ENCODE measurements at regions of chr19 and their contacts with region 1.

Region 1: DNA sequence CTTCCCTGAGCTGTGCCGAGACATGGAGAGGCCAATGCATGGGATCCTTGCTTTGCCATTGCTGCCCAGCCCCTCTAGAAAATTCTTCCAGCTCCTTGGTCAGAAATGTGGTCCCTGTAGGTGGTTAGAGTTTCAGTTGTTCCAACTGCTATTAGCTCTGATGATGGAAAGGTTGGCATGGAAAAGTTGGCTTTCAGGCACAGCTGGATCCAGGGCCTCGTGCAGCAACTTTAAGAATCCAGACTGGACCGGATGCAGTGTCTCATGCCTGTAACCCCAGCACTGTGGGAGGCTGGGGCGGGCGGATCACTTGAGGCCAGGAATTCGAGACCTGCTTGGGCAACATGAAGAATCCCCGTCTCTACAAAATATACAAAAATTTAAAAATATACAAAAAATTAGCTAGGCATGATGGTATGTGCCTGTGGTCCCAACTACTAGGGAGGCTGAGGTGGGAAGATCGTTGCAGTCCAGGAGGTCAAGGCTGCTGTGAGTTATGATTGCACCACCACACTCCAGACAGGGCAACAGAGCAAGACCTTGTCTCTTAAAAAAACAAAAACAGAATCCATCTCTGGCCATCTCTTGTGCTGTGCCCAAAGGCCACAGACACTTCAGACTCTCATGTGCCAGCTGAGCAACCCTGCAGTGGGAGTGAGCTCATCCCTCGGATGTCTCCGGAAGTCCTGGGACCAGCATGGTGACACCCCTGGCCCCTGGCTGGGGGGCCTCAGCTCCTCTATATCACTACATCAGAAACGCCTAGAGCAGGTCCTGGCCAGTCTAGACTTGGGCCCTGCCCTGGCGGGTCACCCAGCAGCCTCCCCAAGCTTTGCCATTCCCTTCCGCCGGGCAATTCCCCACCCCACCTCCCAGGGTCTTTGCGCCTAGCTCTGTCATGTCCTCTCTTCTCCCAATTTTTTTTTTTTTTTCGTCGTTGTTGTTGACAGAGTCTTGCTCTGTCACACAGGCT is 16.8 kb downstream of the MEX3D start:
- DNase-seq: no peak
- H3K4me3 ChIP-seq: no peak overlapping the region
- H3K27me3 ChIP-seq: no peaks in the 10 kb centered on the region
- CTCF ChIP-seq: no peak

Region 2: DNA sequence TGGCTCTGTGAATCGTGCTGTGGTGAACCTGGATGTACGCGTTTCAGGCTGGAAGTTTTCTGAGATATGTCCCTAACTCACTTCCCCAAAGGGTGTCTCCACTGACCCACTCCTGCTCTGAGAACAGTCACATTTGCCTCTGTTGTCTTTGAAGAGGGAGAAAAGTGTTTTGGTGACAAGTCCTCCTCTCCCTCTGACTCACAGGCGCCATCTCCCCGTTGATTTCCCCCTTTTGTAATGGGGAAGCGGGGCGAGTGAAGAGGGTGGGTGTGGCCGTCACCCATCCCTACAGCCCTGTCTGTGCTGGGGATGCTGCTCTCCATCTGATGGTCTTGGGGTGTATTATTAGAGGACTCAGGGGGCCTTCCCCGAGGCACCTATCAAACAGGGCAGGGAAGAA is 91.9 kb before region 1 on chr19:
- CTCF ChIA-PET with region 1: no interaction called
- POLR2A ChIA-PET with region 1: no interaction called
- DNase-seq: no peak
- H3K4me3 ChIP-seq: no peak overlapping the region
- H3K27me3 ChIP-seq: peaks cover 12% of the 10 kb centered on the region
- CTCF ChIP-seq: no peak

Region 3: GRCh38 chr19:1478934-1479707 is 72.2 kb before region 1 on chr19 and contains the start of gene C19orf25:
- CTCF ChIA-PET with region 1: no interaction called
- POLR2A ChIA-PET with region 1: no interaction called
- DNase-seq: peak; percentile 64
- H3K4me3 ChIP-seq: peak within 1 kb of the TSS; percentile 99
- H3K27me3 ChIP-seq: no peaks in the 10 kb centered on the region
- CTCF ChIP-seq: no peak
- polyA plus RNA-seq, gene C19orf25: 23.9 and 32.6 TPM in 2 replicates

Region 4: GRCh38 chr19:1533510-1534150 is 17.7 kb before region 1 on chr19:
- CTCF ChIA-PET with region 1: interaction called, 18 read pairs
- POLR2A ChIA-PET with region 1: no interaction called
- DNase-seq: no peak
- H3K4me3 ChIP-seq: no peak overlapping the region
- H3K27me3 ChIP-seq: no peaks in the 10 kb centered on the region; the same call in 1 of the 2 replicates
- CTCF ChIP-seq: no peak

Region 5: GRCh38 chr19:1540365-1540925 is 10.9 kb before region 1 on chr19:
- CTCF ChIA-PET with region 1: interaction called, 18 read pairs
- POLR2A ChIA-PET with region 1: no interaction called
- DNase-seq: no peak
- H3K4me3 ChIP-seq: no peak overlapping the region
- H3K27me3 ChIP-seq: peaks cover 4% of the 10 kb centered on the region
- CTCF ChIP-seq: no peak

Region 6: GRCh38 chr19:1767464-1767933 is 216.1 kb after region 1 on chr19:
- CTCF ChIA-PET with region 1: interaction called, 11 read pairs
- POLR2A ChIA-PET with region 1: no interaction called
- DNase-seq: no peak
- H3K4me3 ChIP-seq: no peak overlapping the region
- H3K27me3 ChIP-seq: peaks cover 37% of the 10 kb centered on the region
- CTCF ChIP-seq: peak; percentile 98

Region 7: DNA sequence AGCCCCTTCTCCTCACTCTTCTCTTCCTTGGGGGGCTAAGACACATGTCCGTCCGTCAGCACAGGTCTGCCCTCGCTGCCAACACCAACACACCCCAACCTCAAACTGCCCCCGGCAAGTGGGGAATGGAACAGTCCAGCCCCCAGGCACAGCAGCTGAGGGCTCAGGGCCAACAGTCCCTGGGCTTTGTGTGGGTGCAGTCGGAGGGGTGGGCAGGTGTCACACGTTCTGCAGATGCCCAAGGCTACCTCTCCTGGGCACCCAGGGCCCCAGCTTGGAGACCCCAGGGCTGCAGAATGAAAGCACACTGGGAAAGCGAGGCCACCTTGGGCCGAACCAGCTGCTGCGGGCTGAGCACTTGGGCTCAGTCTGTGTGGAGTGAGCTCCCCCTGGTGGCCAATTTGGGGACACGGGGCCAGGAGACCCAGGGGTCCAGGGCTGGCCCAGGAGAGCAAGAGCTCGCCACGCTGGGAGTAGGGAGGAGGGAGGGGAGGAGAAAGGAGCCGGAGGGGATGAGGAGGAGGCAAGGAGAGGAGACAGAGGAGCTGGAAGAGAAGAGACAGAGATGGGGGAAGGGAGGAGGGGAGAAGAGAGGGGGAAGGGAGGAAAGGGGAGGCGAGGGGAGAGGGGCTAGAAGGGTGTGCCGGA is 274.7 kb after region 1 on chr19:
- CTCF ChIA-PET with region 1: interaction called, 13 read pairs
- POLR2A ChIA-PET with region 1: no interaction called
- DNase-seq: no peak
- H3K4me3 ChIP-seq: no peak overlapping the region
- H3K27me3 ChIP-seq: no peaks in the 10 kb centered on the region
- CTCF ChIP-seq: peak; percentile 93

Measured in BJ (cell line).